ENCODE measurements at regions of chr15 and their contacts with region 1.

Region 1: GRCh38 chr15:101288908-101289513 is 6.0 kb downstream of the SNRPA1 start:
- DNase-seq: peak; percentile 42
- ATAC-seq: peak; percentile 63
- H3K4me3 ChIP-seq: no peak overlapping the region
- H3K27ac ChIP-seq: no peak overlapping the region
- H3K4me1 ChIP-seq: peaks cover 15 to 30% of the 10 kb centered on the region in 2 experiments
- H3K27me3 ChIP-seq: no peaks in the 10 kb centered on the region
- CTCF ChIP-seq: peak; percentile 41 to 78 (median 64); a peak in 5 of 6 replicates
- POLR2A ChIP-seq: no peak
- RAD21 ChIP-seq: peak; percentile 50

Region 2: GRCh38 chr15:101277943-101278564 is 11.0 kb before region 1 on chr15:
- CTCF ChIA-PET with region 1: interaction called, 10 read pairs
- POLR2A ChIA-PET with region 1: no interaction called
- RAD21 ChIA-PET with region 1: no interaction called
- intact Hi-C with region 1: no loop called
- DNase-seq: no peak
- ATAC-seq: no peak
- H3K4me3 ChIP-seq: peak overlapping the region; percentile 38 to 94
- H3K27ac ChIP-seq: no peak overlapping the region
- H3K4me1 ChIP-seq: peaks cover 2 to 12% of the 10 kb centered on the region in 2 experiments; a peak in 3 of 4 replicates
- H3K27me3 ChIP-seq: no peaks in the 10 kb centered on the region
- CTCF ChIP-seq: no peak
- POLR2A ChIP-seq: no peak
- RAD21 ChIP-seq: no peak

Measured in HCT116 (cell line).